PC-3 (cell line): ENCODE measurements at regions of chr16 and their contacts with region 1.

Region 1: GRCh38 chr16:24539291-24539849 is at the start of gene RBBP6:
- DNase-seq: peak; percentile 94
- ATAC-seq: peak; percentile 71
- H3K4me3 ChIP-seq: peak within 1 kb of the TSS; percentile 94
- H3K27ac ChIP-seq: peak within 1 kb of the TSS; percentile 88
- H3K4me1 ChIP-seq: peaks cover 37% of the 10 kb centered on the region
- H3K27me3 ChIP-seq: no peaks in the 10 kb centered on the region
- CTCF ChIP-seq: peak; percentile 46
- total RNA-seq, gene RBBP6: 38.4 and 59.0 TPM in 2 replicates

Region 2: DNA sequence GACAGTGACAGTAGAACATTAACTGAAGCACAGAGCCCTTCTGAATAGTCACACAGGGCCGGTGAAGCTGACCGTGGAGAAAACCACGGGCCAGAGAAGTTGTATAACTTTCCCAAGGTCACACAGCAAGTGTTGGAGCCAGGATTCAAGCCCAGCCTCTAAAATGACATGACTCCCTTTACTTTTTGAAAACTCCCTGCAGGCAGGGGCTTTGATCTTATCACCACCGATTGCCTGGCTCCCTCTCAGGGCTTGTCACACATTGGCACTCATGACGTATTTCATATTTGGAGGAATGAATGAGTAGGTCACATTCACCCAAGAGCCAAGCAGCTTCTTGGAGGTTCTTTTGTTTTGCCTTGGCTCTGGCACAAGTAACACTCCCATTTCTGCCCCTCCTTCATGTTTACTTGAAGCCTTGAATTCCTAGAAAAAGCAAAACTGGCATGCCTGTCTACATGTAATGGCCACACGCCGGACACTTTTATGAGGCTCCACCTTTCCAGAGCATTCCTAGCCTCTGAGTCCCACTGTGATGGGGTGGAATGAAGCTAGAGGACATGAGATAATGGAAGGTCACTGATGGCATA is 13.3 kb before region 1 on chr16:
- CTCF ChIA-PET with region 1: no interaction called
- POLR2A ChIA-PET with region 1: interaction called, 3 read pairs
- intact Hi-C with region 1: loop called (anchors 1 kb)
- DNase-seq: peak; percentile 96
- ATAC-seq: peak; percentile 95
- H3K4me3 ChIP-seq: no peak overlapping the region
- H3K27ac ChIP-seq: peak overlapping the region; percentile 92
- H3K4me1 ChIP-seq: peaks cover 29% of the 10 kb centered on the region
- H3K27me3 ChIP-seq: no peaks in the 10 kb centered on the region
- CTCF ChIP-seq: no peak

Region 3: DNA sequence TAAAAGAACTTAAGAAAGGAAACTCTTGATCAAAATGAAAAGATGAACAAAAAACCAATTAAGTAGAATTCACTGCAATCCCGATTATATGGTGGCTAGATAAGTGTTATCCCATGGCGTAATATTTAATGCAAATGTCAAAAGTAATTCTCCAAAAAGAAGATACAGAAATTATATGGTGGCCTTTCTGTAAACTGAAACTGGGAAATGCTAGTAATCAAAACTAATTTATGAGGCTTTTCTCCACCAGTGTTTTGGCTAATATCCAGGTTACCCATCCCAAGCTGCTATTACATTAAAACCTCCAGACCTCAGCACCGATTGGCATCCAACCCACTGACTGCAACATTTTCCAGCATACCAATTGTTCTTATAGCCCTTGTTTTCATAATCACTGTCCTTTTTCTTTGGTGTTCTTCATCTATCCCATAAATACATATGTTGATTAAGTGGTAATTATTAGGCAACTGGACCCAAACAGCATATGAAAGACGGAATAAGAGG is 112.9 kb after region 1 on chr16:
- CTCF ChIA-PET with region 1: no interaction called
- POLR2A ChIA-PET with region 1: no interaction called
- intact Hi-C with region 1: no loop called
- DNase-seq: no peak
- ATAC-seq: no peak
- H3K4me3 ChIP-seq: no peak overlapping the region
- H3K27ac ChIP-seq: no peak overlapping the region
- H3K4me1 ChIP-seq: peaks cover 12% of the 10 kb centered on the region
- H3K27me3 ChIP-seq: no peaks in the 10 kb centered on the region
- CTCF ChIP-seq: no peak